Activated CD4-positive, alpha-beta T cell treated with anti-CD3 and anti-CD28 coated beads for 36 hours (primary cell): ENCODE measurements at regions of chr17 and their contacts with region 1.

Region 1: GRCh38 chr17:81833160-81833920 is at the start of gene MCRIP1:
- DNase-seq: peak; percentile 98
- ATAC-seq: peak; percentile 78
- H3K4me3 Mint-ChIP-seq: peak within 1 kb of the TSS; percentile 87
- H3K27ac Mint-ChIP-seq: peak within 1 kb of the TSS; percentile 91
- H3K4me1 Mint-ChIP-seq: peaks cover 17% of the 10 kb centered on the region
- H3K27me3 Mint-ChIP-seq: no peaks in the 10 kb centered on the region
- total RNA-seq, gene MCRIP1: 45.8 to 50.4 TPM

Region 2: GRCh38 chr17:81294856-81295680 is 538.3 kb before region 1 on chr17 and contains the start of gene SLC38A10:
- CTCF ChIA-PET with region 1: no interaction called
- POLR2A ChIA-PET with region 1: no interaction called
- intact Hi-C with region 1: loop called in 1 of 2 experiments (anchors 1 kb)
- DNase-seq: peak; percentile 95
- ATAC-seq: peak; percentile 91
- H3K4me3 Mint-ChIP-seq: peak within 1 kb of the TSS; percentile 89
- H3K27ac Mint-ChIP-seq: peak within 1 kb of the TSS; percentile 96
- H3K4me1 Mint-ChIP-seq: peaks cover 36% of the 10 kb centered on the region
- H3K27me3 Mint-ChIP-seq: no peaks in the 10 kb centered on the region
- total RNA-seq, gene SLC38A10: 47.6 to 52.9 TPM

Region 3: DNA sequence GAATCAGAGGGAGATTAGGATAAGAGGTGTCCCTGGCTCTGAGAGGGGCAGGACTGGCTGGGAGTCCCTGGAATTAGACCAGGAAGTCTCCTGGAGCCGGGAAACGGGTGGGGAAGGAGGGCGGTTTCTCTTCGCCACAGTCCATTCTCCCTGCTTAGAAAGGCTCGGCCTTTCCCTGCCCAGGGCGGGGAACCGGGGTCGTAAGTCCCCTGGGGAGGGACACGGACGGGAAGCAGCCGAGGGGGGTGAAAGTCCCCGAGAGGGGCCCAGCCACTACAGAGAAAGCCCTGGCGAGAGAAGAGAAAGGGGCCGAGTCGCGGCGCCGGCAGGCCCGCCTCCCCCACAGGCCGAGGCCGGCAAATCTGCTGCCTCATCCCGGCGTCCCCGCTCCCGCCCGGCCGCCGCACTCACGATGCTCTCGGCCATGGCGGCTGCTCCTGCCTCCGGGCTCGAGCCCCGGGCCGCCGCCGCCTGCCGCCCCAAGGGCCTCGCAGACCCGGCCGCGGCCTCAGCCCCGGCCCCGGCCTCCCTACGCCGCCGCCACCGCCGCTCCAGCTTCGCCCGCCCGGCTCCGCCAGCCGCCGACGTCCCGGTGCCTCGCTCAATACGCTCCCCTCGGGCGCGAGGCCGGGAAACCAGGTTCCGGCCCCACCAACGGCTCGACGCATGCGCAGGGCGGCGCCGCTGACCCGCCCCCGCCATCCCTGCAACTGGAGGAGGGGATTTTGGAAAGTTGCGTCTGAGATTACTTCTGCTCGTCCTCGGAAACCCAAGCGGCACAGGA is 196.6 kb before region 1 on chr17 and contains the starts of genes NPLOC4 and TSPAN10:
- CTCF ChIA-PET with region 1: no interaction called
- POLR2A ChIA-PET with region 1: no interaction called
- intact Hi-C with region 1: loop called in 1 of 2 experiments (anchors 1 kb)
- DNase-seq: peak; percentile 91
- ATAC-seq: peak; percentile 89
- H3K4me3 Mint-ChIP-seq: peak within 1 kb of the TSS; percentile 96
- H3K27ac Mint-ChIP-seq: peak within 1 kb of the TSS; percentile 84
- H3K4me1 Mint-ChIP-seq: peaks cover 23% of the 10 kb centered on the region
- H3K27me3 Mint-ChIP-seq: no peaks in the 10 kb centered on the region
- total RNA-seq, gene NPLOC4: 71.8 to 93.1 TPM
- total RNA-seq, gene TSPAN10: 0.34 to 0.35 TPM

Region 4: GRCh38 chr17:81711814-81712467 is 121.4 kb before region 1 on chr17 and contains the start of gene SLC25A10:
- CTCF ChIA-PET with region 1: no interaction called
- POLR2A ChIA-PET with region 1: no interaction called
- intact Hi-C with region 1: loop called in 1 of 2 experiments (anchors 1 kb)
- DNase-seq: peak; percentile 93
- ATAC-seq: peak; percentile 87
- H3K4me3 Mint-ChIP-seq: peak within 1 kb of the TSS; percentile 89
- H3K27ac Mint-ChIP-seq: peak within 1 kb of the TSS; percentile 84
- H3K4me1 Mint-ChIP-seq: peaks cover 24% of the 10 kb centered on the region
- H3K27me3 Mint-ChIP-seq: no peaks in the 10 kb centered on the region
- total RNA-seq, gene SLC25A10: 28.6 to 31.8 TPM

Region 5: DNA sequence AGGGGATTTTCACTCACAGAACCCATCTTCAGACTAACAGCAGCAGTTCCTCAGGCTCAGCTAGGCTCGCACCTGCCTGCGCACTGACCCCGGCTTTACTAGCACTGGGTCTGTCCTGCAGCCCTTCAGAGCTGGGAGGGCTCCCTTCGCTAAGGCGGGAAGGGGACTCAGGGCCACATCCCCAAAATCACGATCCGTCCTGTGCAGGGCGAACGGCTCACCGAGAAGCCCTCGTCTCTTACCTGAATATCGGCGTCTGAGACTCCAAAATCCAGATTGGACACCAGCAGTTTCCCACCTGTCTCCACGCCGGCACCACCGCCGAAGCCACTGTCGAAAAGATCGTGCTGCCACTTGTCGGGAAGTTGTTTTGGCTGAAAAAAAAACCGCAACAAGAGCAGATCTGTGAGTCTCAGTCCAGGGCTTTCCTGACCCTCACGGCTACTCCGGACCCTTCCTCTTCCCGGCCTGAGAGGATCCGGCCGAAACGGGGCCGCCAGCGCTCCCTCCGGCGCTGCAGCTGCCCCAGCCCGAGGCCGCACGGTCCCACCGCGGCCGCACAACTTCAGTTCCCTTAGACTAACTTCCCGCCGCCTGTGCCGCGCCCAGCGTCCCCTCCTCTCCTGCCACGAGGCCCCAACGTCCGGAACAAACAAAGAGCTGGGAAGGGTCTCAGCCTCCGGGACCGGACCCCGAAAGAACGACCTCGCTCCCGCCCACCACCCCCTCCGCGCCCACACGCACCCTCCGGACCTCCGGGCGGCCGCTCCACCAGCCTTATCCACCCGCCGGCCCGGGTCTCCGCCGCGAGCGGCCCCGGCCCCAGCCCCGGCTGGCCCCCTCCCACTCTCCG is 57.3 kb after region 1 on chr17:
- CTCF ChIA-PET with region 1: no interaction called
- POLR2A ChIA-PET with region 1: no interaction called
- intact Hi-C with region 1: loop called in 1 of 2 experiments (anchors 1 kb)
- DNase-seq: peak; percentile 51
- ATAC-seq: no peak
- H3K4me3 Mint-ChIP-seq: peak overlapping the region; percentile 85
- H3K27ac Mint-ChIP-seq: peak overlapping the region; percentile 93
- H3K4me1 Mint-ChIP-seq: peaks cover 32% of the 10 kb centered on the region
- H3K27me3 Mint-ChIP-seq: no peaks in the 10 kb centered on the region

Region 6: DNA sequence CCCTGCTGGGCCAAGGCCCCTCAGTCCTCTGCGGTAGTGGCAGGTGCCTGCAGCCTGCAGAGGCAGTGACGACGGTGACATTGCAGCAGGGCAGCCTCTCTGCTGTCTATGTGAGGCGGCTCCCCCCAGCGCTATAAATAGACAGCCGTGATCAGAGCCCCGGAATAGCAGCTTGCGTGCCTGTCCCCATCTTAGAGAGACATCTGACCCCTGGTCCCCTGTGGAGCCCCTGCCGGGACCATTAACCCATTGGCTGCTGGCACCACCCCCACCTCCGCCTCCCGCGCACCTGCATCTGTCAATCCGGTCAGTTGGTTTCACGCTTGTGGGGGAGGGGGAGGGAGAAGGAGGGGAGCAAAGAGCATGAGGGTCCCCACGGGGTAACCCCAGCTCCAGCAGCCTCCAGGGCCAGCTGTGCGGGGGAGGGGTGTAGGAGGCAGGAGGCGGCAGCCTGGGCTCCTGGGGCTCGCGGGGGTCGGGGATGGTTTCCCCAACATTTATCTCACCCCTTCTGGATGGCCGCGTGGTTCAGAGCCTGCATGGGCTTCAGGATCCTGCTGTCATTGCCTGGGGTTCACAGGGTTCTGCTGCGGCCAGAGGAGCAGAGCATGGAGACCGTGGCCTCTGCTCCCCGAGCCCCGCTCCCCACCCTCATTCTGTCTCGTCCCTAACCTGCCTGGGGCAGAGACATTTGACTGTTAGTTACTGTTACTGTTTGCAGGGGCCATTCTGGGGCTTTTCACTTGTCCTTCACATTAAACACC is 108.6 kb after region 1 on chr17:
- CTCF ChIA-PET with region 1: no interaction called
- POLR2A ChIA-PET with region 1: no interaction called
- intact Hi-C with region 1: loop called in 1 of 2 experiments (anchors 5 kb)
- DNase-seq: no peak
- ATAC-seq: no peak
- H3K4me3 Mint-ChIP-seq: no peak overlapping the region
- H3K27ac Mint-ChIP-seq: no peak overlapping the region
- H3K4me1 Mint-ChIP-seq: peaks cover 5% of the 10 kb centered on the region
- H3K27me3 Mint-ChIP-seq: peaks cover 5% of the 10 kb centered on the region

Region 7: DNA sequence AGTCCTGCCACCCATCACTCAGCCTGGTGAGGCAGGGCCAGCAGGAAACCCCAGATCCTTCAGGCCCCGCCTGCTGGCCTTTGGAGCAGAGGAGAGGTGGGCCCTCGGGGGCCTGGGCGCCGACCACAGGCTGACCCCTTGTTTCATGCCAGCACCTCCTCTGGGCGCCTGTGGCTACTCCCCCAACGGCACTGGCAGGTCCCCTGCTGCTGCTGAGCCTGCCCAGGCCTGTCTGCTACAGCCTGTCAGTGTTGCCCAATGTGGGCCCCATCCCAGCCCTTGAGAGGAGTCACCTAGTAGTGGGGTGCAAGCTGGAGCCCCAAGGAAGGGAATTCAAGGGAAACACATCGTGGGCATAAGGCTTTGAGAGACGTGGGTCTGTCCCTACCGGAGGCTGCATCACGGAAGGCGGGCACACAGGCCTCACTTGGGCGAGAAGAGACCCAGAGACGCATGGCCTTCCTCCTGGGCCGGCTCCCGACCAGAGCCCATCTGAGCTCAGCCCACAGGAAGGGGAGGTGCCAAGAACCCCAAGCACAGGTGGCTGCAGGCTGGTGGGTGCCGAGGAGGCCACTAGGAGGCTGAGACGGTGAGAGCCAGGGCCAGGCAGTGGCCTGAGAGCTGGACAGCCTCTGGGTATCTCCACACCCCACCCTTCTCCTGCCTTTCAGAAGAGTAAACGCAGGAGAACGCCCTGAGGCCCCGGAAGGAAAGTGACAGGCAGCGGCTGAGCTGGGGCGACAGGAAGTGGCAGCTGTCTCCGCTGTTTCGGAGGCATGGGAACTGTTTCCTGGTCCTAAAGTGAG is 272.7 kb after region 1 on chr17:
- CTCF ChIA-PET with region 1: no interaction called
- POLR2A ChIA-PET with region 1: no interaction called
- intact Hi-C with region 1: no loop called
- DNase-seq: peak; percentile 81
- ATAC-seq: peak; percentile 82
- H3K4me3 Mint-ChIP-seq: peak overlapping the region; percentile 84
- H3K27ac Mint-ChIP-seq: peak overlapping the region; percentile 96
- H3K4me1 Mint-ChIP-seq: peaks cover 43% of the 10 kb centered on the region
- H3K27me3 Mint-ChIP-seq: no peaks in the 10 kb centered on the region

Region 8: DNA sequence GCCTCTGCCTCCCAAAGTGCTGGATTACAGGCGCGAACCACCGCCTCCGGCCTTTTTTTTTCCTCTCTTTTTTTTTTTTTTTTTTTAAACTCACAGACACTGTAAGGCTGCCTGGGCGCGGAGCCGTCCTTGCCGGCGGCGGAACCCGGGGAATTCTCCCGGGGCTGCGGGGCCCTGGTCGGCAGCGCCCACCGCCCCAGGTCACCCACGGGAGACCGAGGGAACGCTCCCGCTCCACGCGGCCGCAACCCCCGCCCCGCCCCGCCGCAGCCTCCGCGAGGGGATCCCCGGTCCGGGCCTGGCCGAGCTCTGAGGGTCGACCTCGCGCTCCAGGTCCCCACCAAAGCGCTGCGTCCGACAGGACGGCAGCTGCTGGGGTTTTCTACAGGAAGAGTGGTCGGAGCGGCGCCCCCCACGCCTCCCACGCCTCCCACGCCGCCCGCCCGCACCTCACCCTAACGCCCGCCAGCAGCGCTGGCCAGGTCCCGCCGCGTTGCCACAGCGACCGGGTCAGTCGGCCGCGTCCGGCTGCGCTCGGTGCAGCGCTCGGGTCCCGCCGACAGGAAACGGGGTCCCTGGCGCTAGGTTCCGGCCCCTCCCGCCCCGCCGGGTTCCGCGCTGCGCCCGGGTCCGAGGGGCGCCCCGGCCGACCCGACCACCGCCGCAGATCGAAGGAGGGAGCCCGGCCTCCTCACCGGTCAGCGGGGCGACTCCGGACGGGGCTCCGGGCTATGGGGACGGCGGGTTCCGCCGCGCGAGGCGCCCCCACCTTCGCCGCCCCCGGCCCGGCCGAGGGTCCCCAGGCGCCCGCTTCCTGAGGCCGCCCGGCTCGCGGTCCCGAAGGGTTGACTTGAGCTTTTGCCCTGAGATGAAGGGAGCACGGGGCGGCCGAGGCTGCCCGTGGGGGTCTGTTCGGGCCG is 379.3 kb after region 1 on chr17 and contains the start of gene CCDC57:
- CTCF ChIA-PET with region 1: no interaction called
- POLR2A ChIA-PET with region 1: no interaction called
- intact Hi-C with region 1: loop called in 1 of 2 experiments (anchors 1 kb)
- DNase-seq: peak; percentile 88
- ATAC-seq: peak; percentile 67
- H3K4me3 Mint-ChIP-seq: peak within 1 kb of the TSS; percentile 76
- H3K27ac Mint-ChIP-seq: peak within 1 kb of the TSS; percentile 66
- H3K4me1 Mint-ChIP-seq: peaks cover 39% of the 10 kb centered on the region
- H3K27me3 Mint-ChIP-seq: no peaks in the 10 kb centered on the region
- total RNA-seq, gene CCDC57: 41.6 to 43.8 TPM